ENCODE measurements at regions of chr17 and their contacts with region 1.

Region 1: DNA sequence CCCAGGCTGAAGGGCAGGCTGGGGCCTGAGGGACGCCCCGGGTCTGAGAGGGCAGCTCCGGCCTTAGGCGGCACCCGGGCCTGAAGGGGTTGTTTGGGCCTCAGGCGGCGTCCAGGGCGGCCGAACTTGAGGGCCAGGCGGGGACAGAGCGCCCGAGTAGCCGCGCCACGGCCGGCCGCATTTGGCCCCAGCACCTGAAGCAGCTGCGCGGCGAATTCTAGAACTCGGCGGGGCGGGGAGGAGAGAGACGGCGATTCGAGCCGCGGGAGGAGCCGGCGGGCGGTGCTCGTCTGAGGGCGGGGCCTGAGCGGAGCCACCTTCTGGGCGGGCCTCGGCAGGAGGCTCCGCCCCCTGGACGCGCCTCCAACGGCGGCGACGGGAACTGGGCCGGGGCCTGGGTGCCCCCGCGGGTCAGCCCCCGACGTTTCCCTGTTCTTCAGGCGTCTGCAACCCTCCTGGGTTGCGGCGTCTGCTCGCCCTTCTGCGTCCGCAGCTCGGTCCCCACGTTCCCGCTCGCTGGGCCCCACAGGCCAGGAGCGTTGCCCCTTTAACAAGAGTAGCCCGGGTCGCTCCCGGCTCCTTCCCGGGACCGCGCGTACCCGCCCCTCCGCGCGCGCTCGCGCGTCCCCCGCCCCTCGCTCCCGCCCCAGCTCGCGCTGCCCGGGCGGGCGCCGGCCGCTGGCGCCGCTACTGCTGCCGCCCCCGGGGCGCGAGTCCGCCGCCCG is at the starts of genes INCA1 and KIF1C:
- DNase-seq: peak; percentile 92
- H3K4me3 Mint-ChIP-seq: peak within 1 kb of the TSS; percentile 79
- H3K27ac Mint-ChIP-seq: peak within 1 kb of the TSS; percentile 52
- H3K4me1 Mint-ChIP-seq: peaks cover 26% of the 10 kb centered on the region
- H3K27me3 Mint-ChIP-seq: no peaks in the 10 kb centered on the region
- total RNA-seq, gene INCA1: 0.25 TPM in 1 of 2 experiments, not detected in the other
- total RNA-seq, gene KIF1C: 37.4 to 38.5 TPM

Region 2: GRCh38 chr17:4948931-4949320 is 48.5 kb before region 1 on chr17:
- CTCF ChIA-PET with region 1: no interaction called
- POLR2A ChIA-PET with region 1: interaction called, 43 read pairs
- DNase-seq: peak; percentile 83
- H3K4me3 Mint-ChIP-seq: peak overlapping the region; percentile 96
- H3K27ac Mint-ChIP-seq: peak overlapping the region; percentile 100
- H3K4me1 Mint-ChIP-seq: peaks cover 44% of the 10 kb centered on the region
- H3K27me3 Mint-ChIP-seq: no peaks in the 10 kb centered on the region

Region 3: GRCh38 chr17:4986951-4987766 is 10.3 kb before region 1 on chr17 and contains the start of gene CAMTA2:
- CTCF ChIA-PET with region 1: interaction called, 8 read pairs
- POLR2A ChIA-PET with region 1: interaction called, 38 read pairs
- DNase-seq: peak; percentile 89
- H3K4me3 Mint-ChIP-seq: peak within 1 kb of the TSS; percentile 88
- H3K27ac Mint-ChIP-seq: peak within 1 kb of the TSS; percentile 88
- H3K4me1 Mint-ChIP-seq: peaks cover 40% of the 10 kb centered on the region
- H3K27me3 Mint-ChIP-seq: no peaks in the 10 kb centered on the region
- total RNA-seq, gene CAMTA2: 73.2 to 80.1 TPM

Region 4: GRCh38 chr17:5055543-5055942 is 58.1 kb after region 1 on chr17:
- CTCF ChIA-PET with region 1: interaction called, 13 read pairs
- POLR2A ChIA-PET with region 1: no interaction called
- DNase-seq: no peak
- H3K4me3 Mint-ChIP-seq: no peak overlapping the region
- H3K27ac Mint-ChIP-seq: no peak overlapping the region
- H3K4me1 Mint-ChIP-seq: peaks cover 2% of the 10 kb centered on the region
- H3K27me3 Mint-ChIP-seq: no peaks in the 10 kb centered on the region